Naive thymus-derived CD4-positive, alpha-beta T cell (primary cell): ENCODE measurements at regions of chr12 and their contacts with region 1.

Region 1: GRCh38 chr12:108691175-108691997 is 39.9 kb downstream of the CORO1C start:
- DNase-seq: peak in 8 of 9 donors; percentile 5 to 57 (median 20)
- ATAC-seq: peak; percentile 87
- H3K4me3 ChIP-seq: peak overlapping the region; percentile 43
- H3K4me3 Mint-ChIP-seq: peak overlapping the region; percentile 58 to 77 (median 70)
- H3K27ac ChIP-seq: no peak overlapping the region
- H3K27ac Mint-ChIP-seq: peak overlapping the region in 7 of 9 donors; percentile 1 to 86 (median 53)
- H3K4me1 ChIP-seq: peaks cover 28 to 32% of the 10 kb centered on the region in 2 donors
- H3K4me1 Mint-ChIP-seq: peaks cover 42 to 65% (median 63%) of the 10 kb centered on the region in 7 donors
- H3K27me3 ChIP-seq: no peaks in the 10 kb centered on the region
- H3K27me3 Mint-ChIP-seq: no peaks in the 10 kb centered on the region

Region 2: GRCh38 chr12:108305520-108305919 is 385.9 kb before region 1 on chr12:
- CTCF ChIA-PET with region 1: no interaction called
- POLR2A ChIA-PET with region 1: no interaction called
- intact Hi-C with region 1: no loop called
- DNase-seq: peak in 1 of 9 donors; percentile 35
- ATAC-seq: peak; percentile 32
- H3K4me3 ChIP-seq: no peak overlapping the region
- H3K4me3 Mint-ChIP-seq: no peak overlapping the region
- H3K27ac ChIP-seq: no peak overlapping the region
- H3K27ac Mint-ChIP-seq: no peak overlapping the region
- H3K4me1 ChIP-seq: peaks cover 0 to 15% of the 10 kb centered on the region in 2 donors
- H3K4me1 Mint-ChIP-seq: peaks cover 0 to 32% (median 6%) of the 10 kb centered on the region in 7 donors
- H3K27me3 ChIP-seq: no peaks in the 10 kb centered on the region
- H3K27me3 Mint-ChIP-seq: peaks cover 0 to 49% (median 15%) of the 10 kb centered on the region in 5 donors

Region 3: DNA sequence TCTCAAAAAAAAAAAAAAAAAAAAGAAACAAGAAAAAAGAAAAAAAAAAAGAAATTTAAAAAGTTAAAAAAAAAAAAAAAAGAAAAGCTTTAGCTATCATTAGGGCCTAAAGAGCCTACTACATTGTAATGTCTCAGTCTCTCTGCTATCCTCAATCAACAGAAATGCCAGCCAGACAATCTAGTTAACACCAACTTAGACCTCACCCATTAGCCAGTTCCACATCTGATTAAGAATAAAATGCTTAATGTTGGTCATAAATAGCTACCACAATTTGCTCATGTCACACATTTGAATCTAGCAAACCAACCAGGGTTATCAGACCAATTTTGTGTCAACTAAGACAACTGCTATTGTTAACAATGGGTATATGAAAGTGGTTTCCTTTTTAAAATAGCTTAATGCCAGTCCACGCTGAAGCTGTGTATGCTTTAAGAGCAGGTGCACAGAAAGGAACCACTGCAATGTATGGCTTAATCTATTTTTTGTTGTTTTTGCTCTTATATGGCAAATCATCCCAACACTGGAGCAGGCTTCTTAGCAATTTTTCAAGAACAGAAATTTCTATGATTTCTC is 12.2 kb before region 1 on chr12:
- CTCF ChIA-PET with region 1: no interaction called
- POLR2A ChIA-PET with region 1: interaction called, 3 read pairs
- intact Hi-C with region 1: loop called in 1 of 2 experiments (anchors 1 kb)
- DNase-seq: no peak
- ATAC-seq: no peak
- H3K4me3 ChIP-seq: no peak overlapping the region
- H3K4me3 Mint-ChIP-seq: no peak overlapping the region
- H3K27ac ChIP-seq: no peak overlapping the region
- H3K27ac Mint-ChIP-seq: no peak overlapping the region
- H3K4me1 ChIP-seq: no peaks in the 10 kb centered on the region
- H3K4me1 Mint-ChIP-seq: peaks cover 0 to 20% (median 0%) of the 10 kb centered on the region in 7 donors
- H3K27me3 ChIP-seq: no peaks in the 10 kb centered on the region
- H3K27me3 Mint-ChIP-seq: no peaks in the 10 kb centered on the region